ENCODE measurements at regions of chr15 and their contacts with region 1.

Region 1: DNA sequence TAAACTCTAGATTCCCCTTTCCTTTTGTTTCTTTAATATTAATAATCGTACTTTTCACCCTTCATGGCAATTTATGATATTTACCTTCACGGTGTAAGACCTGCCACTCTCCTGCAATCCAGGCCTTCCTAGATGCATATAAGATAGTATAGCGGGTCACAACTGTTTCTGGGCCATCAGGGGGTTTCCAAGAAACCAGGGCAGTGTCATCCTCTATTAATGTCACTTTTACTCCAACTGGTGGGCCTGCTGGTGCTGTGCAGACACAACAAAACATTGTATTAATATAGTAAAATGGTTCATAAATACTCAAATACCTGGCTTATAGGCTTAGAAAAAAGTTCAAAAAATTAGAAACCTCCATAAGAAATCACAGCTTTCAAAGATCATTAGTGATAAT is 48.9 kb upstream of the PYGO1 start:
- DNase-seq: no peak
- ATAC-seq: peak in 1 of 2 donors; percentile 13
- H3K4me3 ChIP-seq: no peak overlapping the region
- H3K27ac ChIP-seq: peak overlapping the region; percentile 88 to 97 (median 94)
- H3K4me1 ChIP-seq: peaks cover 22 to 24% of the 10 kb centered on the region in 2 donors
- H3K27me3 ChIP-seq: no peaks in the 10 kb centered on the region
- CTCF ChIP-seq: no peak
- POLR2A ChIP-seq: no peak

Region 2: DNA sequence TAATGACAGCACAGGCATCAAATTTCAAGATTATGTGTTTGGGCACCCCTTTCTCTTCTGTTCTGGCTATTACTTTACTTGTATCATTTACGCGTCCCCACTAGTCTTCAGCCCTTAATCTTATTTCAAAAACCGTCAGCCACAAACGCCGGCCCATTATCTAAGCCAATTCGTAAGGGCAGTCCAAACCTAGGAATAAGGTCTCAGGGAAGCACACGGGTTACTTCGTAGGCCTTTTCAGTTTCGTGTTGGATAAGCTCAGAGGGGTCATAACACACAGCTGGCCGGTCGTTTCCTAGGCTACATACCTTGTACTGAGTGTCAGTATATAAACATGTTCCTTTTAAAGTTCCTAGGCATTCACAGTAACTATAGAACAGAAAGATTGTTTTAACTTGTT is 123.9 kb before region 1 on chr15:
- in situ Hi-C with region 1: no loop called
- intact Hi-C with region 1: no loop called
- DNase-seq: no peak
- ATAC-seq: no peak
- H3K4me3 ChIP-seq: no peak overlapping the region
- H3K27ac ChIP-seq: peak overlapping the region in 1 of 4 donors; percentile 33
- H3K4me1 ChIP-seq: no peaks in the 10 kb centered on the region
- H3K27me3 ChIP-seq: no peaks in the 10 kb centered on the region
- CTCF ChIP-seq: no peak
- POLR2A ChIP-seq: no peak

Region 3: GRCh38 chr15:55588070-55588814 is 48.8 kb before region 1 on chr15 and contains the start of gene PYGO1:
- in situ Hi-C with region 1: loop called in 1 of 4 experiments (anchors 5 kb)
- intact Hi-C with region 1: loop called (anchors 1 kb)
- DNase-seq: peak; percentile 24 to 54
- ATAC-seq: peak; percentile 73 to 82
- H3K4me3 ChIP-seq: peak within 1 kb of the TSS; percentile 65 to 76 (median 70)
- H3K27ac ChIP-seq: peak within 1 kb of the TSS; percentile 88 to 93 (median 92)
- H3K4me1 ChIP-seq: peaks cover 3 to 23% of the 10 kb centered on the region in 2 donors
- H3K27me3 ChIP-seq: no peaks in the 10 kb centered on the region
- CTCF ChIP-seq: peak in 1 of 5 experiments; percentile 10
- POLR2A ChIP-seq: peak; percentile 41 to 78
- total RNA-seq, gene PYGO1: 26.7 to 39.1 (median 32.3) TPM